ENCODE measurements at regions of chr20 and their contacts with region 1.

Region 1: DNA sequence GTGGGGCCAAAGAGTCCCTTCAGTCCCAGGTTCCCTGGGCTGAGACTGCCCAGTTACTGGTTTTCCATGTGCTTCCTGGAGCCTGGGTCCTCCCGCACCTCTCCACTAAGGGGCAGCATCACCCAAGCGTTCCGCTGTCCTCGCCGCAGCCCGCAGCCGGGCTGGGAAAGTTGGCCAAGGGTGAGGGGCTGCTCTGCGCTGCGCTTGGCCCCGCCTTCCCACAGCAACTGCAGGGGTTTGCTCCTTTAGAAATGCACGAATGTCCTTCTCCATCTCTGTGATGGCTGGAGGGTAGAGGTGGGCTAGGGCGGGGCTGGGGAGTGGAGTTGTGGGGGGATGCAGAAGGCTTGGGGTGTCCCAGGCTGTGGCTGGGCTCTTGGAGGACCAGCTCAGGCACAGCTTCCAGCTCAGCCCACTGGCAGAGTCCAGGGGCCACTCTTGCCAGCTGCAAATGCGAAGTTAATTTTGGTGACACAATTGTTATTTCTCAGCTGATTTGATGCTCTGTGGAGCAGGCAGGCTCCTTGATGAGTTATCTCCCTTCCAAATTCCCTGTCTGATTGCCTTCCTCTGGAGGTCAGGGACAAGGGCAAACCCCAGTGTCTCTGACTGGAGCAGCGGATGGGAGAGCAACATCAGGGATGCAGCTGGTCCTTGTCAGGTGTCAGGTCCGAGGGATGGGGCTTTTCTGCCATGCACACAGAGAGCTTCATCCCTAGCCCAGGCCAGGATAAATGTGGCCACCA is 63.2 kb downstream of the NOL4L start:
- DNase-seq: peak; percentile 87 to 94
- H3K4me3 ChIP-seq: no peak overlapping the region
- H3K4me3 Mint-ChIP-seq: no peak overlapping the region
- H3K27ac Mint-ChIP-seq: no peak overlapping the region
- H3K4me1 ChIP-seq: no peaks in the 10 kb centered on the region; the same call in 1 of the 2 replicates
- H3K4me1 Mint-ChIP-seq: no peaks in the 10 kb centered on the region
- H3K27me3 ChIP-seq: no peaks in the 10 kb centered on the region
- H3K27me3 Mint-ChIP-seq: no peaks in the 10 kb centered on the region
- CTCF ChIP-seq: peak; percentile 98 to 99

Region 2: DNA sequence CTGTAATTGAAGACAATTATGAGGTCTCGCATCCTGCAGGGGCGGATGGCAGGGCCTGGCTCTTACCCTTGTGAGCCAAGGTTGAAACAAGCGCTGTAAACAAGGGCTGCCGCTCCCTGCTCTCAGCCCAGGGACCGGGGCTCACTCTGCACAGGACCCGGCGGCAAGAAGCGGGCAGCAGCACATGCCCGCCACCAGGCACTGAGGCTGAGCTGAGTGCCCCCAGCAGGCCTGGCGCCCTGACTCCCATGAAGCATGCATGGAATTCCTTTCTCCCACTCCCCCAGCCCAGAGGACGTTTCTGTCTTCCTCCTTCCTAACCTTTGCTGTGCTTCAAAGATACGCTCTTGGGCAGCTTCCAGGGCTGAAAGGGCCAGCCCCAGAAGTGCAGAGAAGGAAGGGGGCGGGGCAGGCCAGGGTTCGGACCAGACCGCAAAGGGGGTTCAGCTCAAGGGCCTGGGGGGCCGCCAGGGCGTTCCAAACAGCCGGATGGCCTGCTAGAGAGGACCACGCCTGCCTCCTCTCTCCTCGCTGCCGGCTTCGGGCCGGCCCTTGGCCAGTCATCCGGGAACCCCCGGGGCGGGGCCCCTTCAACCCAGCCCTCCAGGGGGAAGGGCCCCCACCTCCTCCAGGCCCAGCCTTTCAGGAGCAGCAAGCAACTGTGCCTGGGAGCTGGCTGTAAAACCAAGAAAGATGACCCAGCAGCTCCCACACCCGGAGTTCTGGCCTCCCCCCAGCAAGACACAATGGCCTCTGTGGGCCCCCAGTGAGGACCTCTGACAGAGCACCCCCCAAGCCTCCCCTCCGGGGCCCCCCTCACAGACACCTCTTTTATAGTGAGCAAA is 46.8 kb before region 1 on chr20:
- CTCF ChIA-PET with region 1: interaction called, 3 read pairs
- POLR2A ChIA-PET with region 1: interaction called, 3 read pairs
- intact Hi-C with region 1: loop called (anchors 1 kb)
- DNase-seq: peak; percentile 99 to 100
- H3K4me3 ChIP-seq: peak overlapping the region; percentile 42
- H3K4me3 Mint-ChIP-seq: peak overlapping the region; percentile 93
- H3K27ac Mint-ChIP-seq: peak overlapping the region; percentile 93
- H3K4me1 ChIP-seq: peaks cover 79% of the 10 kb centered on the region
- H3K4me1 Mint-ChIP-seq: peaks cover 69% of the 10 kb centered on the region
- H3K27me3 ChIP-seq: no peaks in the 10 kb centered on the region
- H3K27me3 Mint-ChIP-seq: no peaks in the 10 kb centered on the region
- CTCF ChIP-seq: peak in 1 of 2 experiments; percentile 18

Region 3: DNA sequence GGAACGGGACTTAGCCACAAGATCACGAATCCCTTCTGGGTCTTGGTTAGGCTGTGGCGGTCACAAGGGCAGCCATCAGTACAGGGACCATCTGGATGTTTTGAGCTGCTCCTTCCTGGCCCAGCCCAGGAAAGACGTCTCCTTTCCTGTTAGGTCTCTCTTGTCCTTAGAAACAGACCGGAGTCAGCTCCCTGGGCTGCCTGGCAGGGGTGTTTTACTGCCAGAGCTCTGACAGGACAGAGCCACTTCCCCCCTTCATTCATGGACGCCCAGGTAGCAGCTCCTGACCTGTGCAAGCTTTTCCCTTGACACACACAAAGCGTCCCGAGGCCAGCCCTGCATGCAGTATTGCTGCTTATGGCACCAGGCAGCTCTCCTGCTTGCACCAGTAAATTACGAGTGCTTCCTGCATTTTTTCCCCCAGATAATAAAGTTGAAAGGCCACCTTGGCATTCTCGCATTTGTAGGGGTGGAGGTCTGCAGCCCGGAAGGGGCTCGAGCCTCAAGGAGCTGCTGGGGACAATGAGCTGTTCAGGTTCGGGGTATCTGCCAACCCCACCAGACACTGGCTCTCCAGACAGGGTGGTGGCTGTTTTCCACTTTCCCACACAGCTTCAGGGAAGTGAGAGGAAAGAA is 24.2 kb before region 1 on chr20:
- CTCF ChIA-PET with region 1: no interaction called
- POLR2A ChIA-PET with region 1: interaction called, 12 read pairs
- intact Hi-C with region 1: no loop called
- DNase-seq: peak in 1 of 2 experiments; percentile 53
- H3K4me3 ChIP-seq: no peak overlapping the region
- H3K4me3 Mint-ChIP-seq: no peak overlapping the region
- H3K27ac Mint-ChIP-seq: no peak overlapping the region
- H3K4me1 ChIP-seq: peaks cover 7% of the 10 kb centered on the region; the same call in 1 of the 2 replicates
- H3K4me1 Mint-ChIP-seq: no peaks in the 10 kb centered on the region
- H3K27me3 ChIP-seq: no peaks in the 10 kb centered on the region
- H3K27me3 Mint-ChIP-seq: no peaks in the 10 kb centered on the region
- CTCF ChIP-seq: no peak

Region 4: DNA sequence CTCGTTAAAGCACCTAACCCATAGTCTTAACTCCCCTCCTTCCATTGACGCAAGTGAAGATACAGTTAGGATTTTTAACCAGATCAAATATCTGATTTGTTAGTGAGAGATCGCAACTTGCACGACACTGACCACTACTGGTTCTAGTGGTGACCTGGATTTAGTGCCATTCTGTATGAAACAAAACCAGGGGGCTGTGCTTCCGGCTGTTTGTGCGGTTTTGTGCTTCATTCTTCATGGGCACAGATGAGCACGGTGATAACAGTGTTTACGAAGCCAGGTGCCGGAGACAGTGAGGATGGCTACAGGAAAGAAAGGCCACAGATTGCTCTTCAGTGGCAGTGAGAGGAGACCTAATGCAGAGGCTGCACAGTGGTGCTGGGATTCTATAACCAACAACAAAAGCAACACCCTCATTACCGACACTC is 12.3 kb before region 1 on chr20:
- CTCF ChIA-PET with region 1: interaction called, 10 read pairs
- POLR2A ChIA-PET with region 1: no interaction called
- intact Hi-C with region 1: no loop called
- DNase-seq: peak in 1 of 2 experiments; percentile 66
- H3K4me3 ChIP-seq: no peak overlapping the region
- H3K4me3 Mint-ChIP-seq: peak overlapping the region; percentile 56
- H3K27ac Mint-ChIP-seq: peak overlapping the region; percentile 79
- H3K4me1 ChIP-seq: peaks cover 53% of the 10 kb centered on the region
- H3K4me1 Mint-ChIP-seq: peaks cover 42% of the 10 kb centered on the region
- H3K27me3 ChIP-seq: no peaks in the 10 kb centered on the region
- H3K27me3 Mint-ChIP-seq: no peaks in the 10 kb centered on the region
- CTCF ChIP-seq: peak; percentile 44 to 66

Region 5: DNA sequence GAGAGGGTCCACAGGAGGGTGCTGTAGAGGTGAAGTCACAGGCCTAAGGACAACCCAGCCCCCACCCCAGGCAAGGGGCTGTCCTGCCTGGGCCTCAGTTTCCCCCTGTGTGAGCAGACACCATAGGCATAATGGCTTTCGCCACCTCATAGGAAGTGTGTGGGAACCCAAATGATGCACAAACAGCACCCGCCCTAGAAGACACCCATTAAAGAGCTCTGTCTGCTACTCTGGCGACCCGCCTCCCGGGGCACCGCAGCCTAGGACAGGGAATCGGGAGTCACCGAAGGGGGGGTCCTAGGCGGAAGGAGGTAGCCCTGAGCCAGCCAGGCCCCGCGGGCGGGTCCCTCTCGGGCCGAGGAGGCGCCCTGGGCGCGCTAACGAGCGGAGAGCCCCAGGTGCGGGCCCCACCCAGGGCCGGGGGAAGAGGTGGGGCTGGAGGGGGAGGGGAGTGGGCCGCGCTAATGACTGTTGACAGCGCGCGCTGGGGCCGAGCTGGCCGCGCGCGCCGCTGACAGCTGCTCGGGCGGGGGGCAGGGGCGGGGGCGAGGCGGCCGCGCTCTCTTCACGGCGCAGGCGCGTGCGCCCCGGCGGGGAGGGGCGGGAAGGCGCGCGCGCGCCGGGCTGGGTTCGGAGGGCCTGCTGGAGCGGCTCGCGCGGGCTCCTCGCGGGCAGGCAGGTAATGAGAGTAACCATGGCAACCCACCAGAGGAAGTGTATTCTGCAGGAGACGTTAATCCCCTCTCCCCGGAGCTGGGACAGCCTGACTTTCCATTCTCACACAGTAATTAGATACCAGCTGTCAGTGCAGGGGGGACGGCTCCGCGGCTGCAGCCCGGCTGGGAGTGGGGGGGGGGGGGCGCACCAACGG is 14.2 kb after region 1 on chr20:
- CTCF ChIA-PET with region 1: interaction called, 11 read pairs
- POLR2A ChIA-PET with region 1: no interaction called
- intact Hi-C with region 1: no loop called
- DNase-seq: peak; percentile 87 to 88
- H3K4me3 ChIP-seq: peak overlapping the region; percentile 71
- H3K4me3 Mint-ChIP-seq: peak overlapping the region; percentile 80
- H3K27ac Mint-ChIP-seq: no peak overlapping the region
- H3K4me1 ChIP-seq: peaks cover 17% of the 10 kb centered on the region
- H3K4me1 Mint-ChIP-seq: peaks cover 19% of the 10 kb centered on the region
- H3K27me3 ChIP-seq: no peaks in the 10 kb centered on the region
- H3K27me3 Mint-ChIP-seq: no peaks in the 10 kb centered on the region
- CTCF ChIP-seq: no peak

Region 6: DNA sequence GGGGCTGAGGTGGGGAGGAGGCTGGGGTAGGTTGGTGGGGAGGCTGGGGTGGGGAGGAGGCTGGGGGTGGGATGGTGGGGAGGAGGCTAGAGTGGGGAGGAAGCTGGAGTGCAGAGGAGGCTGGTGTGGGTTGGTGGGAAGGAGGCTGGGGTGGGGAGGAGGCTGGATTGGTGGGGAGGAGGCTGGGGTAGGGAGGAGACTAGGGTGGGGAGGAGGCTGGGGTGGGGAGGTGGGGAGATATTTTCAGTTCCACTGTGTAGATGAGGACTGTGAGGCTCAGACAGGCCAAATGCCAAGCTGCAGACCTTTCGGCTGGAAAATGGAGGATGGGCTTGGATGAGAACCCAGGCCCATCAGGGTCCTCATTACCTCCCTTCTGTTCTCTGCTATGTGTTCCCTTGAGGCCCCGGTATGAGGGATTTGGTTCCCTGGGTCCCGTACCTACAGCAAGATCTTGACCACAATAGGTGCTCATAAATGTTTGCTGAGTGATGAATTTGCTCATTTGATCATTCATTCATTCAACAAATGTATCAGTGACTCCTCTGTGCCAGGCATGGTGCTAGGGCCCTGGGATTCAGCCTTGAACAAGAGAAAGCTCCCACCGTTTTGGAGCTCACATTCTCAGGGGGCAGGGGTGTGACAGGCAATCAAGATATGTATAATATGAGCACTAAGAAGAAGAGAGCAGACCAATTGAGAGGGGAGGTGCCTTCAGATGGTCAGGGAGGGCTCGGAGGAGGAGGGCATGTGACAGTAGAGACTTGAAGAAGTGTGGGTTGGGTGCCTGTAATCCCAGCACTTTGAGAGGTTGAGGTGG is 99.3 kb after region 1 on chr20:
- CTCF ChIA-PET with region 1: interaction called, 4 read pairs
- POLR2A ChIA-PET with region 1: no interaction called
- intact Hi-C with region 1: loop called (anchors 1 kb)
- DNase-seq: peak; percentile 64 to 91
- H3K4me3 ChIP-seq: no peak overlapping the region
- H3K4me3 Mint-ChIP-seq: no peak overlapping the region
- H3K27ac Mint-ChIP-seq: no peak overlapping the region
- H3K4me1 ChIP-seq: no peaks in the 10 kb centered on the region
- H3K4me1 Mint-ChIP-seq: no peaks in the 10 kb centered on the region
- H3K27me3 ChIP-seq: no peaks in the 10 kb centered on the region
- H3K27me3 Mint-ChIP-seq: peaks cover 4% of the 10 kb centered on the region
- CTCF ChIP-seq: no peak

Region 7: DNA sequence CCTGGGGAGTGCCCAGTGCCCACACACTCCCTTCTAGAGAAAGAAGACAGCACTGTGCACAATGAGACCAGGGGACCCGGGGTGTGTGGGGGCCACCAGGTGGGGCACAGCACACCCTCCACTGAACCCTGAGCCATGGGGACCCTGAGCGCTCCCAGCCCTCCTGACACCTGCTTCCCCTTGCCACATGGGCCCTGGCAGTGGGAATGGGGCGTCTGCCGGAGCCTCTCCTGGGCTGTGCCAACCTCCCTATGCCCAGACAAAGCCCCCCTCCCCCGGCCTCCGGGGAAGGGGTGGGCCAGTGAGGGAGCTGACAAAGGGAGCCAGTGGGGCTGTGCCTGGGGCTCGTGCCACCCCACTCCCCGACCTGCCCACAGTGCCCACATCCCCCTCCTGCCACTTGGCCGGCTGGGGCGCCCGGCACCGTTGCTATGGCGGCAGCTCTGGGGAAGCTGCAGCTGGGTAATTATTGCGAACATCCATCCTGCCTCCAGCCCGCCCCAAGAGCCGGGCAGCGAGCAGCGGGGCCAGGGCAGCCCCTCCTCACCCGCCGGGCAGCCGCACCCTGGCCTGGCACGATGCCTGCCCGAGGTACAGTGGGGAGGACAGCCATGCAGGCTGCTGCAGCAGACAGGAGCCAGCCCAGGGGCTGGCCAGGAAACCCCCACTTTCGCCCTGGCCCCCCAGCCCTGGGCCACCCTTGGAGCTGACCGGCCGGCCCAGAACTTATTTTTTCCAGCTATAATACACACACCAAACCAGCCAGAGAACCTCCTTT is 105.1 kb after region 1 on chr20:
- CTCF ChIA-PET with region 1: interaction called, 11 read pairs
- POLR2A ChIA-PET with region 1: no interaction called
- intact Hi-C with region 1: loop called (anchors 1 kb)
- DNase-seq: no peak
- H3K4me3 ChIP-seq: no peak overlapping the region
- H3K4me3 Mint-ChIP-seq: no peak overlapping the region
- H3K27ac Mint-ChIP-seq: no peak overlapping the region
- H3K4me1 ChIP-seq: peaks cover 19% of the 10 kb centered on the region
- H3K4me1 Mint-ChIP-seq: peaks cover 16% of the 10 kb centered on the region
- H3K27me3 ChIP-seq: no peaks in the 10 kb centered on the region
- H3K27me3 Mint-ChIP-seq: no peaks in the 10 kb centered on the region
- CTCF ChIP-seq: no peak